ENCODE measurements at regions of chrX and their contacts with region 1.

Region 1: GRCh38 chrX:41180194-41180908 is 95.1 kb downstream of the USP9X start:
- DNase-seq: peak in 8 of 9 donors; percentile 22 to 64 (median 46)
- ATAC-seq: peak; percentile 80
- H3K4me3 ChIP-seq: no peak overlapping the region
- H3K4me3 Mint-ChIP-seq: peak overlapping the region in 3 of 10 donors; percentile 19 to 58 (median 42)
- H3K27ac ChIP-seq: no peak overlapping the region
- H3K27ac Mint-ChIP-seq: peak overlapping the region in 7 of 9 donors; percentile 42 to 62 (median 56)
- H3K4me1 ChIP-seq: peaks cover 0 to 10% of the 10 kb centered on the region in 2 donors
- H3K4me1 Mint-ChIP-seq: peaks cover 23 to 63% (median 51%) of the 10 kb centered on the region in 7 donors
- H3K27me3 ChIP-seq: no peaks in the 10 kb centered on the region
- H3K27me3 Mint-ChIP-seq: no peaks in the 10 kb centered on the region

Region 2: GRCh38 chrX:41167888-41168287 is 12.5 kb before region 1 on chrX:
- CTCF ChIA-PET with region 1: interaction called, 8 read pairs
- POLR2A ChIA-PET with region 1: no interaction called
- intact Hi-C with region 1: loop called in 1 of 2 experiments (anchors 2 kb)
- DNase-seq: no peak
- ATAC-seq: no peak
- H3K4me3 ChIP-seq: no peak overlapping the region
- H3K4me3 Mint-ChIP-seq: no peak overlapping the region
- H3K27ac ChIP-seq: no peak overlapping the region
- H3K27ac Mint-ChIP-seq: peak overlapping the region in 2 of 9 donors; percentile 36 to 42
- H3K4me1 ChIP-seq: no peaks in the 10 kb centered on the region
- H3K4me1 Mint-ChIP-seq: peaks cover 0 to 5% (median 3%) of the 10 kb centered on the region in 7 donors
- H3K27me3 ChIP-seq: no peaks in the 10 kb centered on the region
- H3K27me3 Mint-ChIP-seq: no peaks in the 10 kb centered on the region

Region 3: DNA sequence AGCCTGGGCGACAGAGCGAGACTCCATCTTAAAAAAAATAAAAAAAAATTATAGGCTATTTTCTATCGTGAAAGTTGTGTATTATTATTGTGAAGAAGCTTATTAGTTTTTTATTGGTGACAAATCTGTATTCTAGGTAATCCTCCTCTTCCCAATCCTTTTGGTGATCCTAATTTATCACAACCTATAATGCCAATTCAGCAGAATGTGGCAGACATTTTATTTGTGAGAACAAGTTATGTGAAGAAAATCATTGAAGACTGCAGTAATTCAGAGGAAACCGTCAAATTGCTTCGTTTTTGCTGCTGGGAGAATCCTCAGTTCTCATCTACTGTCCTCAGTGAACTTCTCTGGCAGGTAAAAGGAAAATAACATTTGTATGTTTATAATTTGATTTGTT is 44.3 kb after region 1 on chrX:
- CTCF ChIA-PET with region 1: no interaction called
- POLR2A ChIA-PET with region 1: no interaction called
- intact Hi-C with region 1: loop called in 1 of 2 experiments (anchors 5 kb)
- DNase-seq: no peak
- ATAC-seq: no peak
- H3K4me3 ChIP-seq: no peak overlapping the region
- H3K4me3 Mint-ChIP-seq: no peak overlapping the region
- H3K27ac ChIP-seq: no peak overlapping the region
- H3K27ac Mint-ChIP-seq: no peak overlapping the region
- H3K4me1 ChIP-seq: no peaks in the 10 kb centered on the region
- H3K4me1 Mint-ChIP-seq: peaks cover 0 to 9% (median 0%) of the 10 kb centered on the region in 7 donors
- H3K27me3 ChIP-seq: no peaks in the 10 kb centered on the region
- H3K27me3 Mint-ChIP-seq: no peaks in the 10 kb centered on the region

Region 4: DNA sequence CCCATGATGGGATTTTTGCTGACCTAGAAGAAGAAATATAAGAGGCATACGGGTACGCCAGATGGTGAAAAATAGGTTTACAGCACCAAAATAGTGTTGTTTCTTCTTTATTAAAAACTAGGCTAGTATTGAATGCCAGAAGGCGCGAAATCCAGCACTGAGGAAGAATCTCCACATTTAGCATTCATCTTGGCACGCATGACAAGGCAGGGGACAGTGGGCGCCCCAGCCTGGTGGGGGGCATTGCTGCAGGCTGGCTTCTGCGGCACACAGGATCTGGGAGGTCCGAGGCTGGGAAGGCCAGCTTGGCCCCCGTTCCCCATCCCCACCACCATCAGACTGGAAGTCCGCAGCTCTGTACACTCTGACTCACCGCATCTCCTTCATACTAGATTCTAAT is 77.9 kb after region 1 on chrX:
- CTCF ChIA-PET with region 1: interaction called, 9 read pairs
- POLR2A ChIA-PET with region 1: no interaction called
- intact Hi-C with region 1: loop called (anchors 1 kb)
- DNase-seq: no peak
- ATAC-seq: no peak
- H3K4me3 ChIP-seq: no peak overlapping the region
- H3K4me3 Mint-ChIP-seq: no peak overlapping the region
- H3K27ac ChIP-seq: no peak overlapping the region
- H3K27ac Mint-ChIP-seq: no peak overlapping the region
- H3K4me1 ChIP-seq: no peaks in the 10 kb centered on the region
- H3K4me1 Mint-ChIP-seq: peaks cover 0 to 6% (median 3%) of the 10 kb centered on the region in 7 donors
- H3K27me3 ChIP-seq: no peaks in the 10 kb centered on the region
- H3K27me3 Mint-ChIP-seq: no peaks in the 10 kb centered on the region